Ascending aorta (tissue), 2 donors: ENCODE measurements at regions of chr12 and their contacts with region 1.

Region 1: GRCh38 chr12:52139552-52140062 is 52.2 kb downstream of the KRT80 start:
- DNase-seq: no peak
- H3K4me3 ChIP-seq: no peak overlapping the region
- H3K27ac ChIP-seq: no peak overlapping the region
- H3K4me1 ChIP-seq: no peaks in the 10 kb centered on the region
- H3K27me3 ChIP-seq: no peaks in the 10 kb centered on the region
- CTCF ChIP-seq: peak in 2 of 3 experiments; percentile 38 to 53

Region 2: DNA sequence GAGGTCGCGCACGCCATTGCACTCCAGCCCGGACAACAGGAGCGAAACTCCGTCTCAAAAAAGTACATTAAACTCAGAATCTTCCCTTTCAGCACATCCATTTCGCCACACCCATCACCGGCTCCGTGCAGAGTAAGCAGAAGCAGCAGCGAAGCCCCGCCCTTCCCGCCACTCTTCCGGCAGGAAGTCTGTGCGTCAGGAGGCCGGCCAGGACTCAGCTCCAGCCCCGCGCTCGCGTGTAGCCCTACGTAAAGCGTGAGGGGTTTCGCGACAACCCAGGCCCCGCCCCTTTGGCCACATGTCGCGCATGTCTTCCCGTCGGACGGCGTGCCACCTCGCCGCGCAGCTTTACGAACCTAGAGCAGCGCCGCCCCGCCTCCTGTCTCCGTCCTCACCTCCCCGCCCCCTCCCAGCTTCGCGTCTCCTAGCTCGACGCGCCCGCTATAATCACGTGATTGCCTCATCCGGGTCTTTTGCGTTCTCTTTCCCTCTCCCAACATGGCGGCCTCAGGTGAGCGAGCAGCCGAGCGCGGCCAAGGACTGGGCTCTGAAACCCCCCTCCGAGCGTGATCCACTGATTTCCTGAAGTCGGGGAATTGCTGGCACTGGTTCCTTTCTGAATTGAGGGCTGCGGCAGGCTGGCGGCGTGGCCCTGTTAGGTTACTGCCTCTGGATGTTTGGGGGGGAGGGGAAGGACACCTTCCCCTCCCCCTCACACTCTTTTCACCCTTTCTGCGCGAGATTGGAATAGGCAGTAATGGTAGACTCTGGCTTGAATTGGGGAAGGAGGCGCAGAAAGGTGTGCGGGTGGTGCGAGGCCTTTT is 866.6 kb after region 1 on chr12 and contains the start of gene EIF4B:
- intact Hi-C with region 1: loop called (anchors 10 kb)
- DNase-seq: peak; percentile 98 to 100
- H3K4me3 ChIP-seq: peak within 1 kb of the TSS; percentile 84 to 89
- H3K27ac ChIP-seq: peak within 1 kb of the TSS; percentile 79 to 87
- H3K4me1 ChIP-seq: peaks cover 14 to 28% of the 10 kb centered on the region in 2 donors
- H3K27me3 ChIP-seq: no peaks in the 10 kb centered on the region
- CTCF ChIP-seq: no peak
- total RNA-seq, gene EIF4B: 181 TPM